BJ (cell line): ENCODE measurements at regions of chr3 and their contacts with region 1.

Region 1: DNA sequence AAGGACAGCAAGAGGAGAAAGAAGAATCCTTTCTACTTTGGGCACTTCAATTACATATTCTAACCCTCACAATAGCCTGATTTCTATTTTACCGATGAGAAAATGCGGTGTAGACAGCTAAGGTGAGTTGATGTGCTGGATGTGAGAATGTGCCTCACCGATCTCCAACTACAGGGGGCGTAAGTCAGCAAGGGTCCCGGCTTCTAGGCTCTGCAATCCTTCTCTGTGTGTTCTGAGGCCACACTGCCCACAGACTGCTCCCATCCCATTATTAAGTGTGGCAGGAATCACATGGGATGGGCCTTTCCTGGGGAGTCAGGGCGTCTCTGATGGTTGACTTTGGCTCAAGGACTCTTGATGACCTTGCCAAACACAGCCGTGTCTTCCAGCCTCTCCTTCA is 23.6 kb upstream of the RPL35A start:
- DNase-seq: no peak
- H3K4me3 ChIP-seq: no peak overlapping the region
- H3K27me3 ChIP-seq: no peaks in the 10 kb centered on the region
- CTCF ChIP-seq: no peak

Region 2: DNA sequence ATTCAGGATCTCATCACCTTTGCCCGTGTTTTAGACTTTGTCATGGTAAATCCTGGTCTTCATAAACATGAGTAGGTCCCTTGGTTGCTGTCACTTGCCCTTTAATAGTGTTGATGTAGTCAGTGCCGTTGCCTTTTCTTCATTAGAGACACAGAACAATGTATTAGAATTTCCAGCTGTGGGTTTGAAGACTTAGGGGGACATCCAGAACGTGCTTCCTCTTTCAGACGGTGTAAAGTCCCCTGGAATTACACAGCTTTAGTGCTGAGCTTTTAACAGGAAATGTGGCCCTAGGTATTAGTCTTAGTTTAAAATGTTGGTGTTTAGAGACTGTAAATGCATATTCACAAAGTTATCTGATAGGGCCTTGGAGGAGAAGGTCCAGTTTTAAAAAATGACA is 144.2 kb before region 1 on chr3:
- CTCF ChIA-PET with region 1: no interaction called
- POLR2A ChIA-PET with region 1: no interaction called
- DNase-seq: no peak
- H3K4me3 ChIP-seq: no peak overlapping the region
- H3K27me3 ChIP-seq: no peaks in the 10 kb centered on the region
- CTCF ChIP-seq: no peak

Region 3: GRCh38 chr3:197942956-197943556 is 16.6 kb after region 1 on chr3:
- CTCF ChIA-PET with region 1: interaction called, 15 read pairs
- POLR2A ChIA-PET with region 1: no interaction called
- DNase-seq: no peak
- H3K4me3 ChIP-seq: no peak overlapping the region
- H3K27me3 ChIP-seq: no peaks in the 10 kb centered on the region
- CTCF ChIP-seq: peak; percentile 80

Region 4: GRCh38 chr3:197970588-197970987 is 44.2 kb after region 1 on chr3:
- CTCF ChIA-PET with region 1: no interaction called
- POLR2A ChIA-PET with region 1: no interaction called
- DNase-seq: no peak
- H3K4me3 ChIP-seq: no peak overlapping the region
- H3K27me3 ChIP-seq: no peaks in the 10 kb centered on the region
- CTCF ChIP-seq: no peak

Region 5: DNA sequence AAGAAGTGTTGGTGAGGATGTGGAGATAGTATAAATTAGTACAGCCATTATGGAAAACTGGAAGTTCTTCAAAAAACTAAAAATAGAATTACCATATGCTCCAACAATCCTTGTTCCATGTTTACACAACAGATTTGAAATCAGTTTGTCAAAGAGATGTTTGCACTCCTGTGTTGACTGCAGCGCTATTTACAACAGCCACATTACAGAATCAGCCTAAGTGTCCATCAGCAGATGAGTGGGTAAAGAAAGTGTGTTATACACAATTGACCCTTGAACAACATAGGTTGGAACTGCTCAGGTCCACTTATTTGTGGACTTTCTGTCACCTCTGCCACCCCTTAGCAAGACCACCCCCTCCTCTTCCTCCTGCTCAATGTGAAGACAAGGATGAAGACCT is 68.3 kb after region 1 on chr3:
- CTCF ChIA-PET with region 1: no interaction called
- POLR2A ChIA-PET with region 1: no interaction called
- DNase-seq: no peak
- H3K4me3 ChIP-seq: no peak overlapping the region
- H3K27me3 ChIP-seq: no peaks in the 10 kb centered on the region
- CTCF ChIP-seq: no peak